ENCODE measurements at regions of chrX and their contacts with region 1.

Region 1: DNA sequence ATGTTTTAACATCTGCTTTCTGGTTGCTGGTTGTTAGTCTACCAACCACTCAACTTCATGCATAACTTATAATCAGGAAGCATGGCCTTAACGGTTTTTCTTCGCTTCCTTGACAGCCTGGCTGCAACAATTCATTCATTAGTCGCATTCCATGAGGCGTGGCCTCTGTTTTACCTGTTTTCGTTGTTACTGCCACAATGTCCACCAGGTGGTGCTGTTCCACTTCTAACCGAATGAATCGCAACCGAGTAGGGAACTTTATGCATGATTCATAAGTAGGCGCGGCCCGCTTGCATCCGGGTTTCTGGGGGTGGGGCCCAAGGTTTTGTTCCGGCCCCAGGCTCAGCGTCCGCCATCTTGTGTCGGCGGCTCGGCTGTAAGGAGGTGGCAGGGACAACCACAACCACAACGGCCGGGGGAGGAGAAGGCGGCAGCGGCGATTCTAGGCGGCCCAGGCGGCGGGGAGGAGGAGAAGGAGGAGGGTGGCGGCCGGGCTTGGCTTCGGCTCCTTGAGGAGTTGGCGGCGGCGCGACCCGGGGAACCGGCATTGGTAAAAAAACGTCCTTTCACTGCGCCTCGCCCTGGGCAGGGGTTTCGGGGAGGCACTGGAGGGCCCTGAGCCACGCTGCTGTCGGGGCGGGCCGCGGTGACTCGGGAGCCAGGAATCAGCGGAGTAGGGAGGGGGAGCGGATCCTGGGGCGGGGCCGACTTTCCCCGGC is at the start of gene UBA1:
- DNase-seq: peak; percentile 100
- H3K4me3 ChIP-seq: peak within 1 kb of the TSS; percentile 82
- H3K27ac ChIP-seq: peak within 1 kb of the TSS; percentile 85
- H3K4me1 ChIP-seq: peaks cover 16% of the 10 kb centered on the region
- H3K27me3 ChIP-seq: peaks cover 3% of the 10 kb centered on the region
- CTCF ChIP-seq: peak; percentile 77
- total RNA-seq, gene UBA1: 237 to 327 TPM

Region 2: GRCh38 chrX:47384502-47384901 is 190.9 kb after region 1 on chrX:
- intact Hi-C with region 1: loop called (anchors 5 kb)
- DNase-seq: peak; percentile 81
- H3K4me3 ChIP-seq: no peak overlapping the region
- H3K27ac ChIP-seq: no peak overlapping the region
- H3K4me1 ChIP-seq: no peaks in the 10 kb centered on the region
- H3K27me3 ChIP-seq: no peaks in the 10 kb centered on the region
- CTCF ChIP-seq: peak; percentile 74

Region 3: DNA sequence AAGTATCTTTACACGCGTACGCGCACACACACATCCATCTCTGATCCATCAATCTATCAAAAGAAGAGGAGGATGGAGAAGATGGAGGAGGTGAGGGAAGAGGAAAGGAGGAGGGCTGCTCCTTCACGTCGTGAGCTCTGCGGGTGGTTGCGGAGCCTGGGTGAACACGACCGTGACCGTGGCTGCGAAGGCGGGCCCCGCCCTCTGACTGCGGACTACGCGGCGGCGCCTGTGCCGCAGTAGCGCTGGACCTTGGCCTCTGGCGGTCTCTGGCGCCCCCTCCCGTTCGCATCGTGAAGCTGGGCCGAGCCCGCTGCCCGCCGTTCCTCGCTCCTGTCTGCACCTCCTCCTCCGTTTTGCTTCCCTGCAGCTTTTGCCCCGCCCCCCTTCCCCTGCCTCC is 329.7 kb after region 1 on chrX:
- intact Hi-C with region 1: loop called (anchors 10 kb)
- DNase-seq: peak; percentile 83
- H3K4me3 ChIP-seq: peak overlapping the region; percentile 55
- H3K27ac ChIP-seq: no peak overlapping the region
- H3K4me1 ChIP-seq: no peaks in the 10 kb centered on the region
- H3K27me3 ChIP-seq: no peaks in the 10 kb centered on the region
- CTCF ChIP-seq: peak; percentile 54